Calu3 (cell line): ENCODE measurements at regions of chr2 and their contacts with region 1.

Region 1: GRCh38 chr2:105454801-105455485 is 56.1 kb upstream of the FHL2 start:
- DNase-seq: peak; percentile 76
- H3K4me3 Mint-ChIP-seq: peak overlapping the region; percentile 40
- H3K27ac Mint-ChIP-seq: peak overlapping the region; percentile 94
- H3K4me1 Mint-ChIP-seq: peaks cover 77% of the 10 kb centered on the region
- H3K27me3 Mint-ChIP-seq: no peaks in the 10 kb centered on the region
- CTCF ChIP-seq: peak; percentile 63

Region 2: DNA sequence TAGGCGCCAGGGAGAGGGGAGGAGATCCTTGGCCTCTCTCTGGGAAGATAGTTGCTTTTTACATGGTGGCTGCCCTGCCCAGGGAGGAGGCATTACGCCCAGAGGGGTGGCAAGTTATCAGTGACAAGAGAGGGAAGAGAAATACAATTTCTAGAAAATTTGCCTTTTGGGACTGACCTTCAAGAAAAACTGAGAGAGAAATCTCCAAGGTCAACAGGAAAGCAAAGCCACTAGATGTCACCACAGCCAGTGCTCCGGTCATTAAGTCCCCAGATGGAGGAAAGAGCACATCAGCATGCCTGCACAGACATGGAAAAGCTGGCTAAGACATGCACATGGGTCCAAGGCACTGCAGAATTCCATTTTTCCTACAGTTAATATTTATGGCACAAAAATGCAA is 77.1 kb before region 1 on chr2:
- CTCF ChIA-PET with region 1: interaction called, 7 read pairs
- intact Hi-C with region 1: loop called (anchors 1 kb)
- DNase-seq: no peak
- H3K4me3 Mint-ChIP-seq: no peak overlapping the region
- H3K27ac Mint-ChIP-seq: no peak overlapping the region
- H3K4me1 Mint-ChIP-seq: peaks cover 45% of the 10 kb centered on the region
- H3K27me3 Mint-ChIP-seq: no peaks in the 10 kb centered on the region
- CTCF ChIP-seq: no peak

Region 3: GRCh38 chr2:105397964-105398698 is 56.8 kb before region 1 on chr2:
- CTCF ChIA-PET with region 1: interaction called, 5 read pairs
- intact Hi-C with region 1: loop called (anchors 1 kb)
- DNase-seq: peak; percentile 45
- H3K4me3 Mint-ChIP-seq: peak overlapping the region; percentile 84
- H3K27ac Mint-ChIP-seq: peak overlapping the region; percentile 74
- H3K4me1 Mint-ChIP-seq: peaks cover 37% of the 10 kb centered on the region
- H3K27me3 Mint-ChIP-seq: no peaks in the 10 kb centered on the region
- CTCF ChIP-seq: no peak

Region 4: GRCh38 chr2:105403785-105404698 is 50.9 kb before region 1 on chr2:
- CTCF ChIA-PET with region 1: interaction called, 5 read pairs
- intact Hi-C with region 1: loop called (anchors 1 kb)
- DNase-seq: peak; percentile 66
- H3K4me3 Mint-ChIP-seq: peak overlapping the region; percentile 60
- H3K27ac Mint-ChIP-seq: peak overlapping the region; percentile 98
- H3K4me1 Mint-ChIP-seq: peaks cover 35% of the 10 kb centered on the region
- H3K27me3 Mint-ChIP-seq: no peaks in the 10 kb centered on the region
- CTCF ChIP-seq: peak; percentile 66

Region 5: DNA sequence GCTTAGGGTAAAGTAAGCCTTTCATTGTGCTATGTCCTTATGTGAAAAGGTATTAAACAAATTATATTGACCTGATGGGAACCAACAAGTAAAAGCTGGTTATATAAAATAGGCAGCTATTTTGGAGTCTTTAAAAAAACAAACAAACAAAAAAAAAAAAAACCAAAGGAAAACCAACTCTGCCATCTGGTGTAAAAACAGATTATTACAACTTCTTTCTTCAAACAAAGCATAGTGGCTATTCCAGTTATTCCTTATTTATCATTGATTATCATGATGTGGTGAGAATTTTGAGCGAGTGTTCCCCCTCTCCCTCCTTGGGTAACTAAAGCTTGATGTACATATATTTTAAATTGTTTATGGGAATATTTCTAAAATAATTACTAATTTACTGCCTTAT is 66.3 kb after region 1 on chr2:
- CTCF ChIA-PET with region 1: interaction called, 5 read pairs
- intact Hi-C with region 1: loop called (anchors 1 kb)
- DNase-seq: no peak
- H3K4me3 Mint-ChIP-seq: no peak overlapping the region
- H3K27ac Mint-ChIP-seq: no peak overlapping the region
- H3K4me1 Mint-ChIP-seq: peaks cover 8% of the 10 kb centered on the region
- H3K27me3 Mint-ChIP-seq: no peaks in the 10 kb centered on the region
- CTCF ChIP-seq: peak; percentile 49

Region 6: GRCh38 chr2:105929516-105929915 is 474.6 kb after region 1 on chr2:
- CTCF ChIA-PET with region 1: no interaction called
- intact Hi-C with region 1: loop called (anchors 5 kb)
- DNase-seq: no peak
- H3K4me3 Mint-ChIP-seq: no peak overlapping the region
- H3K27ac Mint-ChIP-seq: no peak overlapping the region
- H3K4me1 Mint-ChIP-seq: peaks cover 25% of the 10 kb centered on the region
- H3K27me3 Mint-ChIP-seq: no peaks in the 10 kb centered on the region
- CTCF ChIP-seq: no peak